Activated CD8-positive, alpha-beta T cell treated with anti-CD3 and anti-CD28 coated beads for 36 hours (primary cell): ENCODE measurements at regions of chr11 and their contacts with region 1.

Region 1: GRCh38 chr11:64204464-64204989 is 2.0 kb upstream of the FERMT3 start:
- DNase-seq: peak; percentile 87
- ATAC-seq: peak; percentile 10
- H3K4me3 Mint-ChIP-seq: peak overlapping the region; percentile 53
- H3K27ac Mint-ChIP-seq: peak overlapping the region; percentile 65
- H3K4me1 Mint-ChIP-seq: peaks cover 44% of the 10 kb centered on the region
- H3K27me3 Mint-ChIP-seq: no peaks in the 10 kb centered on the region
- CTCF ChIP-seq: peak; percentile 62

Region 2: DNA sequence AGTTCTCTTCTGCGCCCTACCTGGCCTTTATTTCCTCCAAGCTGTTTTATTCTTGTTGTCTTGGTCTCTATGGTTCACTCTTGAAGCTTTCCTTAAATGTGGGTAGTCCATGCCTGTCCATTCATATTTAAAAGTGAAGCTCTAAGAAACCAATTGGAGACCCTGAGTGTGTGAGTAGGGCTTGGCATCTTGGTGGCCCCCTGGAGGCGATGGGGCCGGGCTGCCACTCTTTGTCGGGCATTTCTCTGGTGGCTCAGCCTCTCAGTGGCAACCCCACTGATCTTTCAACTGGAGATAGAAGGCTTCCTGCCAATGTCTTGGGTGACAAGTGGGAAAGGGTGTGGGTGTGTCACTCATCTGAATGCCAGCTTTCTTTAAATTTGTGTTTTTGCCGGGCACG is 12.4 kb after region 1 on chr11:
- CTCF ChIA-PET with region 1: interaction called, 34 read pairs
- POLR2A ChIA-PET with region 1: interaction called, 33 read pairs
- intact Hi-C with region 1: no loop called
- DNase-seq: no peak
- ATAC-seq: peak; percentile 26
- H3K4me3 Mint-ChIP-seq: no peak overlapping the region
- H3K27ac Mint-ChIP-seq: no peak overlapping the region
- H3K4me1 Mint-ChIP-seq: peaks cover 24% of the 10 kb centered on the region
- H3K27me3 Mint-ChIP-seq: no peaks in the 10 kb centered on the region
- CTCF ChIP-seq: peak; percentile 20

Region 3: GRCh38 chr11:64240394-64241174 is 36.1 kb after region 1 on chr11 and contains the start of gene FKBP2:
- CTCF ChIA-PET with region 1: interaction called, 35 read pairs
- POLR2A ChIA-PET with region 1: interaction called, 61 read pairs
- intact Hi-C with region 1: no loop called
- DNase-seq: peak; percentile 98
- ATAC-seq: peak; percentile 64
- H3K4me3 Mint-ChIP-seq: peak within 1 kb of the TSS; percentile 93
- H3K27ac Mint-ChIP-seq: peak within 1 kb of the TSS; percentile 98
- H3K4me1 Mint-ChIP-seq: peaks cover 44% of the 10 kb centered on the region
- H3K27me3 Mint-ChIP-seq: no peaks in the 10 kb centered on the region
- CTCF ChIP-seq: no peak
- total RNA-seq, gene FKBP2: 23.5 to 26.9 TPM

Region 4: GRCh38 chr11:64269380-64270234 is 65.1 kb after region 1 on chr11:
- CTCF ChIA-PET with region 1: interaction called, 22 read pairs
- POLR2A ChIA-PET with region 1: interaction called, 9 read pairs
- intact Hi-C with region 1: no loop called
- DNase-seq: peak; percentile 98
- ATAC-seq: peak; percentile 73
- H3K4me3 Mint-ChIP-seq: peak overlapping the region; percentile 96
- H3K27ac Mint-ChIP-seq: peak overlapping the region; percentile 95
- H3K4me1 Mint-ChIP-seq: peaks cover 21% of the 10 kb centered on the region
- H3K27me3 Mint-ChIP-seq: no peaks in the 10 kb centered on the region
- CTCF ChIP-seq: no peak

Region 5: DNA sequence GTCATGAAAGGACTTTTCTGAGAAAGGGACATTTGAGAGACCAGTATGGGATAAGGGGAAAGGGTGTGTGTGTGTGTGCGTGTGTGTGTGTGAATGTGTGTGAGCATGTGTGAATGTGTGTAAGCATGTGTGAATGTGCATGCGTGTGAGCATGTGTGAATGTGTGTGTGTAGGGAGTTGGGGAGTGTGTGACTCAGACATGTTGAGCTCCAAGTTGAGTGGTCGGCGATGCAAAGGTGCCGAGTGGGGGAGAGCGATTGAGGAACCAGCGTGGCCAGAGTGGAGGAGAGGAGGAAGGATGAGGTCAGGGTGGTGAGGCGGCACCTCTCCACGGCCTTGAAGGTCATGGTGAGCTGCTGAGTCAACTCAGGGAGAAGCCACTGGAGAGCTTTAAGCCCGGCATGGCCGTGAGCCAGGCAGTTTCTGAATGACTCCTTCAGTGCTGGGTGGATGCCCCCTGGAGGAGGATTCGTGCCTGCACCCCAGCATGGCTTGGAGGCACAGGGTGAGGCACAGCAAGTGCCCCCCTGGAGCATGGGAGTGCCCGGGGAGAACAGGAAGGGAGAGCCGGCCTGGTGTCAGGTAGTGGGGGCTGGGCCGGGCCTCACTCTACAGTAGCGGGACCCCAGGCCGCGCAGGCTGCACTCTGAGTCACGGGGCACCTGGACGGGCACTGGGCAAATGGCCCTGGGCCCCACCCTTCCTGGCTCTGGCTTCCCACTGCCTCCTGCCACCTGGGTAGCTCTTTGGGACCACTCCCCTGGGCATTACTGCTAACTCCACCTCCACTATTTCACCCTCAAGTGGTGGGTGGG is 127.2 kb after region 1 on chr11:
- CTCF ChIA-PET with region 1: interaction called, 10 read pairs
- POLR2A ChIA-PET with region 1: interaction called, 4 read pairs
- intact Hi-C with region 1: no loop called
- DNase-seq: peak; percentile 96
- ATAC-seq: peak; percentile 89
- H3K4me3 Mint-ChIP-seq: peak overlapping the region; percentile 0
- H3K27ac Mint-ChIP-seq: peak overlapping the region; percentile 75
- H3K4me1 Mint-ChIP-seq: peaks cover 24% of the 10 kb centered on the region
- H3K27me3 Mint-ChIP-seq: no peaks in the 10 kb centered on the region
- CTCF ChIP-seq: peak; percentile 67